Activated naive CD4-positive, alpha-beta T cell treated with anti-CD3 and anti-CD28 coated beads for 36 hours (primary cell): ENCODE measurements at regions of chr4 and their contacts with region 1.

Region 1: DNA sequence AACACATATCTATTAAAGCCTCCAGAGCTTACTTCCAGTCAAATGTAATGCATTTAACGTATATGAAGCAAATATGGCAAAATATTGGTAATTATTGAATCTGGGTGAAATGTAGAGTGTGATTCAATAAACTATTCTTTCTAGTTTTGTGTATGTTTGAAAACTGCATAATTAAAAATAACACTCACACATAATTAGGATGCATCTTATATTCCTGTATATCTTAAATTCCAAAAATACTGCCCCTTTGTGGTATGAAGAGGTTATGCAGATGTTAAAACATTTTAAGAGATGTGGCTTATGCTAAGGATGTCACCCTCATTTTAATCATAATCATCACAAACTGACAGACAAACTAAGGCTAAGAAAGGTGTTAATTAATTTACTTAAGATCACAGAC is 182.9 kb downstream of the COX18 start:
- DNase-seq: no peak
- H3K4me3 Mint-ChIP-seq: no peak overlapping the region
- H3K27ac Mint-ChIP-seq: no peak overlapping the region
- H3K4me1 Mint-ChIP-seq: no peaks in the 10 kb centered on the region
- H3K27me3 Mint-ChIP-seq: peaks cover 16% of the 10 kb centered on the region

Region 2: DNA sequence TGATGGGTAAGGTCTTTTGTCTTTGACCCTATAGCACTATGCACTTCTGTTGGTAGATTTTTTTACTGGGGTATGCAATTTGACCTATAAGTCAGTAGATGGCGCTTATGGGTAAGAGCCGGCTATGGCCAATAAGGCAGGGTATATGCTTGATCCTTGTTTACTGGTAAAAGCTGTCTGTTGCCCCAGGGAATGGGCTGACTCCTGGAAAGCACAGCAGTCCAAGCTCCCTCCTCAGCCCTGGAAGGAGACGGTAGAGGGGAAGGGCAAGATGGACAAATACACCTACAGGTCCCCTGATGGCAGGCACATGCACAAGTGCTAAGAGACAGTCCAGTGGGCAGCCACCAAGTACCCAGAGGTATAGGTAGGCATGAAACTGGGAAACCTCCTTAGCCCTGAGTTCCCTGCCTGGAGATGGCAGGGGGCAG is 381.3 kb before region 1 on chr4:
- CTCF ChIA-PET with region 1: no interaction called
- intact Hi-C with region 1: loop called (anchors 1 kb)
- DNase-seq: no peak
- H3K4me3 Mint-ChIP-seq: no peak overlapping the region
- H3K27ac Mint-ChIP-seq: no peak overlapping the region
- H3K4me1 Mint-ChIP-seq: no peaks in the 10 kb centered on the region
- H3K27me3 Mint-ChIP-seq: peaks cover 11% of the 10 kb centered on the region